ENCODE measurements at regions of chrX and their contacts with region 1.

Region 1: DNA sequence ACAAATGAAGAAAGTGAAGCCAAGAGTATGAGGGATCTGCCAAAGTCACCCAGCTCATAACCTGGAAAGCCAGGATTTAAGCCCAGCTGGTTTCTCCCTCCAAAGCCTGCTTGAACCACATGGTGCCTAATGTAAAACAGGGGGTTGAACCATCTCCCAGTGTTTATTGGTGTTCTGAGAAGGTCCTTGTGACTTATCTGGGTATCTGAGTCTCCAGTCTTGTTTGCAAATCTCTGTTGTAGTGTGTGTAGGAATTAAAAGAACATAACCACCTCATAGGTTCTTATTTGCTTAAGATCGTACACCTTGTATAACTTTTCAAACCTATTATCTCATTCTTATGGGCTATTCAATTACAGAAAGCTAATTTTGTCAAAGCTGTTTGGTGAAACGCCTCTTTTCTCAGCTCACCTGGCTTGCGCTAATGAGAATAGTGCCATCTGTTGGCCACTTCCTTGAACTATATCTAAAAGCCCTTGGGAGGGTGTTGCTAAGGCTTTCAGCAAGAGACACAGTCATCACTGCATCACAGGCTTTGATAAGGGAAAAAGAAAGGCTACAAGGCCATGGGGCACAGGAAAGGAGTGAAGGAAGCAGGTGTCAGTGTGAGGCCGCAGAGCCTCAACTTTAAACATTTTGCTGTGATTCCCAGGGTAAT is 34.0 kb downstream of the ETDB start:
- DNase-seq: peak; percentile 8 to 63 (median 48)
- H3K4me3 ChIP-seq: no peak overlapping the region
- H3K4me3 Mint-ChIP-seq: no peak overlapping the region
- H3K27ac ChIP-seq: no peak overlapping the region
- H3K27ac Mint-ChIP-seq: peak overlapping the region in 2 of 8 donors; percentile 21 to 40
- H3K4me1 ChIP-seq: no peaks in the 10 kb centered on the region
- H3K4me1 Mint-ChIP-seq: peaks cover 3 to 6% (median 5%) of the 10 kb centered on the region in 3 donors
- H3K27me3 ChIP-seq: no peaks in the 10 kb centered on the region
- H3K27me3 Mint-ChIP-seq: peaks cover 3 to 12% of the 10 kb centered on the region in 2 donors

Region 2: GRCh38 chrX:134963041-134963440 is 123.3 kb before region 1 on chrX:
- CTCF ChIA-PET with region 1: interaction called, 17 read pairs
- POLR2A ChIA-PET with region 1: no interaction called
- DNase-seq: no peak
- H3K4me3 ChIP-seq: no peak overlapping the region
- H3K4me3 Mint-ChIP-seq: no peak overlapping the region
- H3K27ac ChIP-seq: no peak overlapping the region
- H3K27ac Mint-ChIP-seq: no peak overlapping the region
- H3K4me1 ChIP-seq: no peaks in the 10 kb centered on the region
- H3K4me1 Mint-ChIP-seq: no peaks in the 10 kb centered on the region
- H3K27me3 ChIP-seq: no peaks in the 10 kb centered on the region
- H3K27me3 Mint-ChIP-seq: peaks cover 19 to 25% of the 10 kb centered on the region in 2 donors

Region 3: DNA sequence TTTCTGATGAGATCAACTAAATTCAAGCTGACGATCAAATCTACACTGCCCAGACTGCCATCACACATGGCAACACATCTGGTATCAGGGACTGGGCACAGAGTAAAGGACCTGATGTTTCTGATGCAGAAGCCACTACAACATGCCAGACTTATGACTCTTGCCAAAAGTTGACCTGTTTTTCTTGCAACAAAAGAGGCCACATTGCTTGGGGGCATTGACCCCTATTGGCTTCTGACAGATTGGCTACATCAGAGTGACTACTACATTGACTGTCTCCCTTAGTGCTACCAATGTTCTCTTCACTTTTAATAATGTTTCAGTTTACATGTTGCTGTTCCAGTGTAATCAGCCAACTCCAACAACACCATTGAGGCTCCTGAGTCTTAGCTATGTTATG is 110.8 kb before region 1 on chrX:
- CTCF ChIA-PET with region 1: no interaction called
- POLR2A ChIA-PET with region 1: no interaction called
- DNase-seq: no peak
- H3K4me3 ChIP-seq: no peak overlapping the region
- H3K4me3 Mint-ChIP-seq: no peak overlapping the region
- H3K27ac ChIP-seq: no peak overlapping the region
- H3K27ac Mint-ChIP-seq: no peak overlapping the region
- H3K4me1 ChIP-seq: no peaks in the 10 kb centered on the region
- H3K4me1 Mint-ChIP-seq: no peaks in the 10 kb centered on the region
- H3K27me3 ChIP-seq: no peaks in the 10 kb centered on the region
- H3K27me3 Mint-ChIP-seq: peaks cover 0 to 3% of the 10 kb centered on the region in 2 donors

Measured in CD8-positive, alpha-beta memory T cell (primary cell).